Activated B cell treated with CpG ODN at 0.5 μM for 24 hours (primary cell): ENCODE measurements at regions of chr14 and their contacts with region 1.

Region 1: DNA sequence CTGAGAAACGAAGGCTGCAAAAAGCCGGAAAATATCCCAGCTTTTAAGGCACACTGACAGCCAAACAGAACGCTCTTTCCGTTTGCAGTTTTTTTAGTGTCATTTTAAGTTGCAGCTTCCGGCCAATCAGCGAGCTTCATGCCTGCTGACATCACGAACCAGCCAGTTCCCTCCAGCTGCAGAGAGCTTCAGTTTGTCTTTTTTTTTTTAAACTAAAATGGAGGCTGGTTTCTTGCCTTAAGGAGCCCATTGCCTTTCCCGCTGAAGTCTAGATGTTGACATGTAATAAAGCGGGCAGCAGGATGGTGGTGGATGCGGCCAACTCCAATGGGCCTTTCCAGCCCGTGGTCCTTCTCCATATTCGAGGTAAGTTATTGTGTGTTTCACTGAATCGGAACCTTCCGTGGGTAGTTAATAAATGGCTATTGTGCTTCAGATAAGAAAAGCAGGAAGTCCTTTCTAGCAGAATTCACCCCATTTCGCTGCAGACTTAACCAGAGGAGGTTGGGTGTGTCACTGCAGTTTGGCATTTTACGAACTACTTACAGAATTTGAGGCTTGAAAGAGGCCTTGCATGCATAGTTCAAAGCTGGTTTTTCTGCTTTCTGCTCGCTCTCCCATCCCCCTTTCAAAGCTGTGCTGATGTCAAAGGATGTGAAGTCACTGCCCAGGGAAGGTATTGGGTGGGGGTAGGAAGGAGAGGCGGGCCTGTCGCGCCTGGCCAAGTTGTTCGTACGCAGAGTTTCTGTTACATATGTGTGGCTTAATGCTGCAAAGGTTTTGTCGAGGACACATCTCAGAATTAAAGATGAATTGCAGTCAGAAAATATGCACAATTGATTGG is 48.4 kb downstream of the PPP2R5C start:
- DNase-seq: peak; percentile 66
- ATAC-seq: peak; percentile 91
- H3K4me3 Mint-ChIP-seq: peak overlapping the region; percentile 97
- H3K27ac Mint-ChIP-seq: peak overlapping the region; percentile 99
- H3K4me1 Mint-ChIP-seq: peaks cover 55% of the 10 kb centered on the region
- H3K27me3 Mint-ChIP-seq: no peaks in the 10 kb centered on the region
- CTCF ChIP-seq: no peak

Region 2: DNA sequence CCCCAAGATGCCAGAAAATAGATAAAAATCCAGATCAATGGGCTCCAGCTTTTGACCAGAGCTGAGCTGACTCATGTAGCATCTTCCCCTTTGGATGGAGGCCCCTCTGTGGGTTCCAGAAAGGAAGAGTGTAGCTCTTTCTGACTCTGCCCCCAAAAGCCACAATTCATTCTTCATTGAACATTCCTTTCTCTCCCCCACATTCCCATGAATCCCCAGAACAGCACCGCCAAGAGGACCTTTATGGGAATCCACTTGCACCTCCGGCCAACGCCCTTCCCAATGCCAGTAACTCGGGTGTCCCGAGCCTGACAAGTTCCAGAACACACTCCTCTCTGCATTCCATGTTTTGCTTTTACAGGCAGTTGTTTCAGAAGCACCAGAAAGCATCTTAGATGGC is 459.2 kb before region 1 on chr14:
- CTCF ChIA-PET with region 1: no interaction called
- POLR2A ChIA-PET with region 1: no interaction called
- intact Hi-C with region 1: no loop called
- DNase-seq: no peak
- ATAC-seq: no peak
- H3K4me3 Mint-ChIP-seq: no peak overlapping the region
- H3K27ac Mint-ChIP-seq: no peak overlapping the region
- H3K4me1 Mint-ChIP-seq: no peaks in the 10 kb centered on the region
- H3K27me3 Mint-ChIP-seq: no peaks in the 10 kb centered on the region
- CTCF ChIP-seq: no peak

Region 3: GRCh38 chr14:101635749-101636560 is 173.9 kb before region 1 on chr14:
- CTCF ChIA-PET with region 1: no interaction called
- POLR2A ChIA-PET with region 1: interaction called, 18 read pairs
- intact Hi-C with region 1: no loop called
- DNase-seq: no peak
- ATAC-seq: no peak
- H3K4me3 Mint-ChIP-seq: no peak overlapping the region
- H3K27ac Mint-ChIP-seq: no peak overlapping the region
- H3K4me1 Mint-ChIP-seq: no peaks in the 10 kb centered on the region
- H3K27me3 Mint-ChIP-seq: peaks cover 41% of the 10 kb centered on the region
- CTCF ChIP-seq: no peak

Region 4: GRCh38 chr14:101767618-101768362 is 42.1 kb before region 1 on chr14:
- CTCF ChIA-PET with region 1: interaction called, 22 read pairs
- POLR2A ChIA-PET with region 1: interaction called, 52 read pairs
- intact Hi-C with region 1: no loop called
- DNase-seq: no peak
- ATAC-seq: no peak
- H3K4me3 Mint-ChIP-seq: no peak overlapping the region
- H3K27ac Mint-ChIP-seq: no peak overlapping the region
- H3K4me1 Mint-ChIP-seq: peaks cover 11% of the 10 kb centered on the region
- H3K27me3 Mint-ChIP-seq: no peaks in the 10 kb centered on the region
- CTCF ChIP-seq: no peak

Region 5: GRCh38 chr14:101791919-101792572 is 17.8 kb before region 1 on chr14:
- CTCF ChIA-PET with region 1: interaction called, 3 read pairs
- POLR2A ChIA-PET with region 1: interaction called, 41 read pairs
- intact Hi-C with region 1: loop called (anchors 1 kb)
- DNase-seq: no peak
- ATAC-seq: peak; percentile 64
- H3K4me3 Mint-ChIP-seq: peak overlapping the region; percentile 36
- H3K27ac Mint-ChIP-seq: peak overlapping the region; percentile 36
- H3K4me1 Mint-ChIP-seq: peaks cover 23% of the 10 kb centered on the region
- H3K27me3 Mint-ChIP-seq: no peaks in the 10 kb centered on the region
- CTCF ChIP-seq: no peak

Region 6: GRCh38 chr14:101843665-101844064 is 33.8 kb after region 1 on chr14:
- CTCF ChIA-PET with region 1: interaction called, 6 read pairs
- POLR2A ChIA-PET with region 1: interaction called, 70 read pairs
- intact Hi-C with region 1: loop called (anchors 1 kb)
- DNase-seq: peak; percentile 48
- ATAC-seq: peak; percentile 79
- H3K4me3 Mint-ChIP-seq: peak overlapping the region; percentile 76
- H3K27ac Mint-ChIP-seq: peak overlapping the region; percentile 94
- H3K4me1 Mint-ChIP-seq: peaks cover 83% of the 10 kb centered on the region
- H3K27me3 Mint-ChIP-seq: no peaks in the 10 kb centered on the region
- CTCF ChIP-seq: peak; percentile 26

Region 7: GRCh38 chr14:101889898-101890297 is 80.0 kb after region 1 on chr14:
- CTCF ChIA-PET with region 1: no interaction called
- POLR2A ChIA-PET with region 1: no interaction called
- intact Hi-C with region 1: no loop called
- DNase-seq: no peak
- ATAC-seq: no peak
- H3K4me3 Mint-ChIP-seq: no peak overlapping the region
- H3K27ac Mint-ChIP-seq: peak overlapping the region; percentile 35
- H3K4me1 Mint-ChIP-seq: no peaks in the 10 kb centered on the region
- H3K27me3 Mint-ChIP-seq: no peaks in the 10 kb centered on the region
- CTCF ChIP-seq: no peak

Region 8: DNA sequence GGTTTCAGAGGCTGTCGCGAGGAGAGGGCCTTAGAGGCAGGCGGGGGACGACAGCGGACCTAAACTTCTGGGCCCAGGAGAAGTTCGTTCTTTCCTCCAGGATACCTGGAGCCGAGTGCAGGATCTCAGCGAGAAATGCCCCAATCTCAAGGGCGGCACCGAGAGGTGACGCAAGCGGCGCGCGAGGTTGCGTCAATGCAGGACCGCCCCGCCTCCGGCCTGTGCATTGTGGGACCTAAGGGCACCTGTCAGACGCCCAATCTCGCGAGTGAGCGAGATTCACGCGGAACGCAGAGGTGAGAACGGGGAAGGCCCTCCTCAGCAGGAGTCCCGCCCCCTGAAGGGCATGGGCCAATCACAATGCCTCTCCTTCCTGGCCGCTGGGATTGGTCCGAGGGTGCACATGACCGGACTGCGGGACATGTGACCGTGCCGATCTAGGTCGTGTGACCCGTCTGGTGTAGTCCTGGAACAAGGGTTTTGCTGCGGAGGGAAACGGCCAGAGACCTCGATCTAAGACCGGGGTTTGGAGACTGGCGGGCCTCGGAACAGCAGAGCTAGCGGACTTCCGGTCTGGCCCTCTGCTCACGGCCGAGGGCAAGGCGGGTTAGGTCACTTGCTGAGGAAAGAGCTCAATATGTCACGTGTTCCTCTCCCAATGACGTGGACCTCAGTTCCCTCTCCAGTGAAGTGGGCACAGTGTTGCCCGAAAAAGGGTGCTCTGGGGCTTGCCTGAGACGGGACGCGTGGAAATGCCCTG is 138.2 kb after region 1 on chr14:
- CTCF ChIA-PET with region 1: no interaction called
- POLR2A ChIA-PET with region 1: interaction called, 14 read pairs
- intact Hi-C with region 1: loop called (anchors 1 kb)
- DNase-seq: peak; percentile 98
- ATAC-seq: peak; percentile 95
- H3K4me3 Mint-ChIP-seq: peak overlapping the region; percentile 93
- H3K27ac Mint-ChIP-seq: peak overlapping the region; percentile 97
- H3K4me1 Mint-ChIP-seq: peaks cover 19% of the 10 kb centered on the region
- H3K27me3 Mint-ChIP-seq: peaks cover 22% of the 10 kb centered on the region
- CTCF ChIP-seq: no peak

Region 9: GRCh38 chr14:102749393-102750305 is 939.8 kb after region 1 on chr14:
- CTCF ChIA-PET with region 1: no interaction called
- POLR2A ChIA-PET with region 1: no interaction called
- intact Hi-C with region 1: no loop called
- DNase-seq: no peak
- ATAC-seq: no peak
- H3K4me3 Mint-ChIP-seq: no peak overlapping the region
- H3K27ac Mint-ChIP-seq: no peak overlapping the region
- H3K4me1 Mint-ChIP-seq: peaks cover 16% of the 10 kb centered on the region
- H3K27me3 Mint-ChIP-seq: no peaks in the 10 kb centered on the region
- CTCF ChIP-seq: no peak

Region 10: GRCh38 chr14:102764220-102764671 is 954.4 kb after region 1 on chr14:
- CTCF ChIA-PET with region 1: no interaction called
- POLR2A ChIA-PET with region 1: no interaction called
- intact Hi-C with region 1: no loop called
- DNase-seq: peak; percentile 42
- ATAC-seq: peak; percentile 59
- H3K4me3 Mint-ChIP-seq: peak overlapping the region; percentile 62
- H3K27ac Mint-ChIP-seq: peak overlapping the region; percentile 88
- H3K4me1 Mint-ChIP-seq: peaks cover 59% of the 10 kb centered on the region
- H3K27me3 Mint-ChIP-seq: no peaks in the 10 kb centered on the region
- CTCF ChIP-seq: no peak